ENCODE measurements at regions of chr1 and their contacts with region 1.

Region 1: DNA sequence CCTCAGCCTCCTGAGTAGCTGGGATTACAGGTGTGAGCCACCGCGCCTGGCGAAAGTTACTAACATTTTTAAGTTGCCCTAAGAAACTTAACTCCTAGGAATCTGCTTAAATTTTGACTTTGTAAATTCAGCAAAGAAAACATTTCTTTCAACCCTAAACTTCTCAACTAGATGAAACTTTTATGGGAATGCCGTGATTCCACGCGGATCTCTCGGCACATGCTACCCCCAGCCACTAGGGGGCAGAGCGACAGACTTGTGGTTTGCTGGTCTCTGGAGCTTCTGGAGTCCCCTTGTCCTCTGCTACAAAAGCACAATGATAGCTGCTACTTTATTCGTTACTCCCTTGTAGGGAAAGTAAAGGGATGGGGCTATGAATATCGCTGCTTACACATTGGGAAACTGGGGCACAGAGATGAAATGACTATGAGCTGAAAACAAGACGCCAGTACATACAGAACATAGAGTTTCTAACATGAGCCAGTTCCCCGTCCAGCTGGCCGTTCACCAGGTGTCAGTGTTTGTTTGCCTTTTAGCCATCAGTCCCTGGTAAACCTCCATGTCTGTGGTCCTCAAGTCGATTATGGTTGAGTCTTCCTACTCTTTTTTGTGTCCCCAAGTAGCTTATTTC is 114.7 kb downstream of the PBX1 start:
- DNase-seq: peak; percentile 72
- ATAC-seq: peak; percentile 60
- H3K4me3 Mint-ChIP-seq: no peak overlapping the region
- H3K27ac Mint-ChIP-seq: no peak overlapping the region
- H3K4me1 Mint-ChIP-seq: peaks cover 43% of the 10 kb centered on the region
- H3K27me3 Mint-ChIP-seq: no peaks in the 10 kb centered on the region
- CTCF ChIP-seq: peak; percentile 92

Region 2: DNA sequence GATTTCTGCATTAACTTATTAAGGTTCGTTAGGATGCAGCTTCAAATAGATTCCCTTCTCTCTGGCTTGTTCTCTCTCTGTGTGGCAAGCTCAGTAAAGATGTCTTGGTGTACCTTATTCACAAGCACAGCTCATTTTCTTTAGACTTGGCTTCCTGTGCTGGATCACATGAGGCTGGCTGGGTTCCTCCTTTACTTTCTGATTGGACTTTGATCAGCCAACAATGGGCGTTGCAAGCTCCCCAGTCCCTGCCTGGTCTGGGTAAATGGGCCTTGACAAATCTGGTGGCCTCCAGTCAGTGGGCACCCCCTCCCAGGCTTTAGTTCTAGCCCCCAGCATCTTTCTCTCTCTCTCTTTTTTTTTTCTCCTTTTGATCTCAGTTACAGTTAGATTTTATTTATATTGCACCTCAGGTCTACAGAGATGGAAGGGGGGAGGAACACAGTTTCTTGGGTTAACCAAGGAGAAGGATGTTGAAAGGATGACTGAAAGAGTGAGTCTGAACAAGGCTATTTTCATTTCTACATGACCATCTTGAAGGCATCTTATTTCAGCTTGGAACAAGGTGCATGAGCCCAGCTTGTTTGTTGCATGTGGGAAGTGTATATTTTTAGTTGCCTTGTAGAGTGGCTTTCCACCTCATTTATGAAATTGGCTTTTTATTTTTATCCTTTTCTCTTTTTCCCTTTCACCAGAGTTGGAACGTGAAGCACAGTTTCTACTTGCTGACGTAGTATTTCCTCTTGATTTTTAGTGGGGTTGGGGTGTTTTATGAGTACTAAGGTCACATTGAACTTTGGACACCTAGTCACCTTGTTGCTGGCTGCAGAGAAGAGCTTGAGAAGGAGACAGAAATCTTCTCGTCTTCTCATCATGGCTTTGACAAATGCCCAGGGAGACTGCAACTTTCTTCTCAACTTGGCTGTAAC is 37.6 kb before region 1 on chr1:
- CTCF ChIA-PET with region 1: interaction called, 15 read pairs
- POLR2A ChIA-PET with region 1: no interaction called
- DNase-seq: no peak
- ATAC-seq: no peak
- H3K4me3 Mint-ChIP-seq: peak overlapping the region; percentile 44
- H3K27ac Mint-ChIP-seq: peak overlapping the region; percentile 90; the same call in 1 of the 2 replicates
- H3K4me1 Mint-ChIP-seq: peaks cover 78% of the 10 kb centered on the region
- H3K27me3 Mint-ChIP-seq: no peaks in the 10 kb centered on the region
- CTCF ChIP-seq: no peak

Region 3: GRCh38 chr1:164648636-164649035 is 25.1 kb before region 1 on chr1:
- CTCF ChIA-PET with region 1: interaction called, 14 read pairs
- POLR2A ChIA-PET with region 1: no interaction called
- DNase-seq: no peak
- ATAC-seq: no peak
- H3K4me3 Mint-ChIP-seq: no peak overlapping the region
- H3K27ac Mint-ChIP-seq: peak overlapping the region; percentile 76
- H3K4me1 Mint-ChIP-seq: peaks cover 79% of the 10 kb centered on the region
- H3K27me3 Mint-ChIP-seq: no peaks in the 10 kb centered on the region
- CTCF ChIP-seq: no peak

Region 4: GRCh38 chr1:164660412-164660772 is 13.3 kb before region 1 on chr1:
- CTCF ChIA-PET with region 1: interaction called, 24 read pairs
- POLR2A ChIA-PET with region 1: interaction called, 3 read pairs
- DNase-seq: no peak
- ATAC-seq: no peak; the same call in 1 of the 2 replicates
- H3K4me3 Mint-ChIP-seq: no peak overlapping the region
- H3K27ac Mint-ChIP-seq: peak overlapping the region; percentile 87
- H3K4me1 Mint-ChIP-seq: peaks cover 54% of the 10 kb centered on the region
- H3K27me3 Mint-ChIP-seq: no peaks in the 10 kb centered on the region
- CTCF ChIP-seq: no peak

Region 5: DNA sequence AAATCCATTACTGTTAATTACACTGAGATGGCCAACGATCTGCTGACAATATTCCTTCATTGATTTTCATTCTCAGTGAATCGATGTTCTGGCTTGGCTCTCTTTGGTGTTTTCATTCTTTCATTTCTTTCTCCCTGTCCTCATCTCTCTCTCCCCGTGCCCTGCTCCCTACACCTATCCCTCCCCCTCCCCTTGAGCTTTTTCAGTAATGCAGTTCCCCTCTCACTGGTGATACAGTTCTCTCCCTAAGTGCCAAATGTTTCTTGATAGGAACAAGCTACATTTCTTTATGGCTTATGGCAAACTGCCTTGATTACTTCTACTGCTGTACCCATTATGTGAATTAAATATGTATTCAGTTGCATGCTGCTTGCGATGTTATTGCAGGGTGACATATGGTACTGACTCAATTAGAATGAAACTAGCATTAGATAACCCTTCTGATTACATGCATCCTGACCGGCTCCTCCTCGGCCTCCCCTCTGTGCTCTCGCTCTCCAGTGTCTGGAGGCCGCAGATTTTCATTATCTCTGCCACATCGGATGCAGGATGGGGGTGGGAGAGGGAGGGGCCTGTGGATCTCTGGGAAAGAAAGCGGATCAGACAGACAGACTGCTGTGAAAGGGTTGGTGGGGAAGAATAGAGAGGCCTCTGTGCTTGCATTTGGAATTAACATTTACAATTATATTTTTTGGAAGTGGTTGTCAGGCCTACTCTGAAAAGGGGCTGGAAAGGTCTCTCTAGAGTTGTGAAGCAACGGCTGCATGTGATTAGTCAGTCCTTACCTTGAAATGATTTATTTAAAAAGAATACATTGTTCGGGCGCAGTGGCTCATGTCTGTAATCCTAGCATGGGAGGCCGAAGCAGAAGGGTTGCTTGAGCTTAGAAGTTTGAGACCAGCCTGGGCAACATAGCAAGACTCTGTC is 16.2 kb after region 1 on chr1:
- CTCF ChIA-PET with region 1: interaction called, 21 read pairs
- POLR2A ChIA-PET with region 1: no interaction called
- DNase-seq: no peak
- ATAC-seq: peak; percentile 59
- H3K4me3 Mint-ChIP-seq: peak overlapping the region; percentile 11; the same call in 1 of the 2 replicates
- H3K27ac Mint-ChIP-seq: peak overlapping the region; percentile 52; the same call in 1 of the 2 replicates
- H3K4me1 Mint-ChIP-seq: peaks cover 28% of the 10 kb centered on the region
- H3K27me3 Mint-ChIP-seq: no peaks in the 10 kb centered on the region
- CTCF ChIP-seq: no peak

Region 6: GRCh38 chr1:164786980-164787833 is 113.5 kb after region 1 on chr1:
- CTCF ChIA-PET with region 1: interaction called, 43 read pairs
- POLR2A ChIA-PET with region 1: no interaction called
- DNase-seq: peak; percentile 85
- ATAC-seq: peak; percentile 91
- H3K4me3 Mint-ChIP-seq: peak overlapping the region; percentile 44
- H3K27ac Mint-ChIP-seq: peak overlapping the region; percentile 95
- H3K4me1 Mint-ChIP-seq: peaks cover 51% of the 10 kb centered on the region
- H3K27me3 Mint-ChIP-seq: no peaks in the 10 kb centered on the region
- CTCF ChIP-seq: peak; percentile 85

Region 7: DNA sequence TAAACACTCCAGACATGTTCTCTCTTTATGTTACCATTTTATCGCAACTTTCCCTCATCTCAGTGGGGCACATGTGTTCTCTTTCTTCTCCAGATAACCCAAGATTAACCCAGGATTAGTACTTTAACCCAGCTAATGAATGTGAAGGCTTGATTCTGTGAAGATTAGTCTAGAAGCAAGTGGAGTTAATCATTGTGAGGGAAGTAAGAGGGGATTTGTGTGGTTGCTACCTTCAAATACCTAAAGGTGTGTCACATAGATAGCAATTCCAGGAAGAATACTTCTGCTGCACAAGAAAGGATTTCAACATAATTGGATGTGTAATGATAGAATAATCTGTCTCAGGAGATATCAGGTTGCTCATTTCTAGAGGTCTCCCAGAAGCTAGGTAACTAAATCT is 212.4 kb after region 1 on chr1:
- CTCF ChIA-PET with region 1: no interaction called
- POLR2A ChIA-PET with region 1: no interaction called
- DNase-seq: no peak
- ATAC-seq: no peak
- H3K4me3 Mint-ChIP-seq: no peak overlapping the region
- H3K27ac Mint-ChIP-seq: no peak overlapping the region
- H3K4me1 Mint-ChIP-seq: no peaks in the 10 kb centered on the region
- H3K27me3 Mint-ChIP-seq: no peaks in the 10 kb centered on the region
- CTCF ChIP-seq: no peak

Region 8: DNA sequence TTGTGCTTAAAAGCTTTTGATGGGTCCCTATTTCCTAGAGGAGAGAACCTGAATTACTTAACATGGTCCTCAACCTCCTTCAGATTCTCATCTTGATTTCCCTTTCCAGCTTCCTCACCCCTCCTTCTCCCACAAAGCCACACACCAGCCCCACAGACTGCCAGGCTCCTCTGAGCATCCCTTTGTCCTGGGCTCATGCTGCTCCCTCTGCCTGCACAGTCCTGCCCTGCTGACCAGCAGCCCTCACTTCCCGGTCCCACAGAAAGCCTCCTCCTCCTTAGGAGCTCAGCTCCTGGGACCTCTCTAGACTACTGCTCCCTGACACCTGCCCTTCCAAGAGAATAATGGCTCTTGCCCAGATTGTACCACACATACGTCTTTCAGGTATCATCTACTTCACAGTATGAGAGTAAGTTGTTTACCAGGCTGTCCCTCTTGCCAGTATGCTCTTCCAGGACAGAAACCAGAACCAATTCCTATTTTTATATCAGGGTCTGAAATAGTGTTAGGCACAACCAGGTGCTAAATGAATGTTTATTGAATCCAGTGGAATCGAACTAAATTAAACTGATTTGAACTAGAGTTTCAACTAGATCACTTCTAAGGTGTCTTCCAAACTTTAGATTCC is 309.4 kb after region 1 on chr1:
- CTCF ChIA-PET with region 1: no interaction called
- POLR2A ChIA-PET with region 1: no interaction called
- DNase-seq: peak; percentile 16
- ATAC-seq: peak; percentile 93
- H3K4me3 Mint-ChIP-seq: no peak overlapping the region
- H3K27ac Mint-ChIP-seq: no peak overlapping the region
- H3K4me1 Mint-ChIP-seq: no peaks in the 10 kb centered on the region
- H3K27me3 Mint-ChIP-seq: peaks cover 33% of the 10 kb centered on the region
- CTCF ChIP-seq: no peak